ENCODE measurements at regions of chr17 and their contacts with region 1.

Region 1: GRCh38 chr17:58710936-58711775 is 18.8 kb downstream of the RAD51C start:
- DNase-seq: peak in 6 of 9 experiments; percentile 9 to 67 (median 44)
- ATAC-seq: no peak
- H3K4me3 ChIP-seq: no peak overlapping the region
- H3K4me3 Mint-ChIP-seq: no peak overlapping the region
- H3K27ac ChIP-seq: no peak overlapping the region
- H3K27ac Mint-ChIP-seq: no peak overlapping the region
- H3K4me1 ChIP-seq: no peaks in the 10 kb centered on the region
- H3K4me1 Mint-ChIP-seq: no peaks in the 10 kb centered on the region
- H3K27me3 ChIP-seq: no peaks in the 10 kb centered on the region
- H3K27me3 Mint-ChIP-seq: no peaks in the 10 kb centered on the region
- CTCF ChIP-seq: peak; percentile 86

Region 2: DNA sequence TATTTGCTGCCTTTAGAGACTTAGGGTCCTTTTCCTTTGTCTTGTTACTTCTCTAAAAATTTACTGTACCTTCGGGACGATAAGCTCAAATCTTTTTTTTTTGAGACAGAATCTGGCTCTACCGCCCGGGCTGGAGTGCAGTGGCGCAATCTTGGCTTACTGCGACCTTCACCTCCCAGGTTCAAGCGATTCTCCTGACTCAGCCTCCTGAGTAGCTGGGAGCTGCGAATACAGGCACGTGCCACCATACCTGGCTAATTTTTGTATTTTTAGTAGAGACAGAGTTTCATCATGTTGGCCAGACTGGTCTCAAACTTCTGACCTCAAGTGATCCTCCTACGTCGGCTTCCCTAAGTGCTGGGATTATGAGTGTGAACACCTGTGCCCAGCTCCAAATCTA is 11.4 kb before region 1 on chr17:
- CTCF ChIA-PET with region 1: interaction called, 10 read pairs
- POLR2A ChIA-PET with region 1: no interaction called
- intact Hi-C with region 1: no loop called
- DNase-seq: no peak
- ATAC-seq: no peak
- H3K4me3 ChIP-seq: no peak overlapping the region
- H3K4me3 Mint-ChIP-seq: no peak overlapping the region
- H3K27ac ChIP-seq: no peak overlapping the region
- H3K27ac Mint-ChIP-seq: no peak overlapping the region
- H3K4me1 ChIP-seq: no peaks in the 10 kb centered on the region
- H3K4me1 Mint-ChIP-seq: peaks cover 5% of the 10 kb centered on the region
- H3K27me3 ChIP-seq: no peaks in the 10 kb centered on the region
- H3K27me3 Mint-ChIP-seq: no peaks in the 10 kb centered on the region
- CTCF ChIP-seq: no peak

Region 3: DNA sequence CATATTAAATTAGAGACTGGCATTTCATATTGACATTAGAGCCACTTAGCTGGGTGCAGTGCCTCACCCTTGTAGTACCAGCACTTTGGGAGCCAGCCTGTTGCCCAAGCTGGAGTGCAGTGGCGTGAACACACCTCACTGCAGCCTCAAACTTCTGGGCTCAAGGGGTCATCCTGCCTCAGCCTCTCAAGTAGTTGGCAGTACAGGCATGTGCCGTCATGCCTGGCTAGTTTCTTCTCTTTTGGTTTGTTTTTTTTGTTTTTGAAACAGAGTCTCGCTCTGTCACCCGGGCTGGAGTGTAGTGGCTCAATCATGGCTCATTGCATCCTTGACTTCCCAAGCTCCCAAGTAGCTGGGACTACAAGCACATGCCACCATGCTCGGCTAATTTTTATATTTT is 53.2 kb after region 1 on chr17:
- CTCF ChIA-PET with region 1: no interaction called
- POLR2A ChIA-PET with region 1: no interaction called
- intact Hi-C with region 1: no loop called
- DNase-seq: no peak
- ATAC-seq: no peak
- H3K4me3 ChIP-seq: no peak overlapping the region
- H3K4me3 Mint-ChIP-seq: no peak overlapping the region
- H3K27ac ChIP-seq: no peak overlapping the region
- H3K27ac Mint-ChIP-seq: no peak overlapping the region
- H3K4me1 ChIP-seq: no peaks in the 10 kb centered on the region
- H3K4me1 Mint-ChIP-seq: no peaks in the 10 kb centered on the region
- H3K27me3 ChIP-seq: peaks cover 5 to 7% of the 10 kb centered on the region in 2 experiments
- H3K27me3 Mint-ChIP-seq: peaks cover 30% of the 10 kb centered on the region
- CTCF ChIP-seq: no peak

Region 4: DNA sequence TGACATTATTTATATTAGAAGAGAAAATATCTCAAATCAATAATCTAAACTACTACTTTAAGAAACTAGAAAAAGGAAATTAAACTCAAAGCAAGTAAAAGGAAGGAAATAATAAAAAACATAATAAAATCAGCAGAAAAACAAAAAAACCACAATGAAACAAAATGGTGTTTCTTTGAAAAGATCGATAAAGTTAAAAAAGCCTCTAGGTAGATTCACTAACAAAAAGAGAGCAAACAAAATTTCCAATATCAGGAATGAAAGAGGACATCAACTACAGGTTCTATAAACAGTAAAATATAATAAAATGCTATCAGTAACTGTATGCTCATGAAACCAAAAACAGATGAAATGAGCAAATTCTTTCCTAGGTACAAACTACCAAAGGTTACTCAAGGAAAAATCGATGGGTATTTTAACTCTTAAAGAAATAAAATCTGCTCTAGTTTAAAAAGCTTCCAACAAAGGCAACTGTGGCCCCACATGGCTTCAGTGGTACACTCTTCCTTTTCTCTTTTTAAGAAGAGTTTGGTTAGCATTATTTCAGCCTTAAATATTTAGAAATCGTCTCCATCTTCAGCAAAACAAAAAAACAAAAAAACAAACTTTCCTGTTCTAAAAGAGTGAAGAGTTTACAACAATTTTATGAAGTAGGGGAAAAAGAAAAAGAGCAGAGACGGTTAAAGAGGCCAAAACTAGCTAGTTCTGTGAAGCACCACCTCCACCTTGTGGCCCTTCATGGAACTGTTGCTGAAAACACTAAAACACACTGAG is 293.4 kb after region 1 on chr17:
- CTCF ChIA-PET with region 1: interaction called, 37 read pairs
- POLR2A ChIA-PET with region 1: no interaction called
- intact Hi-C with region 1: loop called (anchors 1 kb)
- DNase-seq: peak; percentile 52 to 82 (median 74)
- ATAC-seq: peak; percentile 54
- H3K4me3 ChIP-seq: no peak overlapping the region
- H3K4me3 Mint-ChIP-seq: no peak overlapping the region
- H3K27ac ChIP-seq: peak overlapping the region in 1 of 2 experiments; percentile 40
- H3K27ac Mint-ChIP-seq: peak overlapping the region; percentile 60
- H3K4me1 ChIP-seq: peaks cover 15% of the 10 kb centered on the region
- H3K4me1 Mint-ChIP-seq: peaks cover 13% of the 10 kb centered on the region
- H3K27me3 ChIP-seq: no peaks in the 10 kb centered on the region
- H3K27me3 Mint-ChIP-seq: no peaks in the 10 kb centered on the region
- CTCF ChIP-seq: peak; percentile 98